Right cardiac atrium (tissue), 5 donors: ENCODE measurements at regions of chr12 and their contacts with region 1.

Region 1: GRCh38 chr12:123232807-123233543 is at the starts of genes MPHOSPH9 and MTRFR:
- DNase-seq: peak; percentile 99
- ATAC-seq: peak; percentile 99
- H3K4me3 ChIP-seq: peak within 1 kb of the TSS; percentile 88
- H3K27ac ChIP-seq: peak within 1 kb of the TSS; percentile 75
- H3K4me1 ChIP-seq: peaks cover 3% of the 10 kb centered on the region
- H3K27me3 ChIP-seq: no peaks in the 10 kb centered on the region
- total RNA-seq, gene MPHOSPH9: 14.8 to 27.4 (median 22.5) TPM
- total RNA-seq, gene MTRFR: 9.5 to 12.5 (median 10.7) TPM

Region 2: GRCh38 chr12:122860346-122861090 is 372.5 kb before region 1 on chr12:
- intact Hi-C with region 1: loop called in 1 of 4 experiments (anchors 10 kb)
- DNase-seq: peak; percentile 88 to 94 (median 94)
- ATAC-seq: peak; percentile 65 to 76
- H3K4me3 ChIP-seq: no peak overlapping the region
- H3K27ac ChIP-seq: no peak overlapping the region
- H3K4me1 ChIP-seq: no peaks in the 10 kb centered on the region
- H3K27me3 ChIP-seq: no peaks in the 10 kb centered on the region

Region 3: DNA sequence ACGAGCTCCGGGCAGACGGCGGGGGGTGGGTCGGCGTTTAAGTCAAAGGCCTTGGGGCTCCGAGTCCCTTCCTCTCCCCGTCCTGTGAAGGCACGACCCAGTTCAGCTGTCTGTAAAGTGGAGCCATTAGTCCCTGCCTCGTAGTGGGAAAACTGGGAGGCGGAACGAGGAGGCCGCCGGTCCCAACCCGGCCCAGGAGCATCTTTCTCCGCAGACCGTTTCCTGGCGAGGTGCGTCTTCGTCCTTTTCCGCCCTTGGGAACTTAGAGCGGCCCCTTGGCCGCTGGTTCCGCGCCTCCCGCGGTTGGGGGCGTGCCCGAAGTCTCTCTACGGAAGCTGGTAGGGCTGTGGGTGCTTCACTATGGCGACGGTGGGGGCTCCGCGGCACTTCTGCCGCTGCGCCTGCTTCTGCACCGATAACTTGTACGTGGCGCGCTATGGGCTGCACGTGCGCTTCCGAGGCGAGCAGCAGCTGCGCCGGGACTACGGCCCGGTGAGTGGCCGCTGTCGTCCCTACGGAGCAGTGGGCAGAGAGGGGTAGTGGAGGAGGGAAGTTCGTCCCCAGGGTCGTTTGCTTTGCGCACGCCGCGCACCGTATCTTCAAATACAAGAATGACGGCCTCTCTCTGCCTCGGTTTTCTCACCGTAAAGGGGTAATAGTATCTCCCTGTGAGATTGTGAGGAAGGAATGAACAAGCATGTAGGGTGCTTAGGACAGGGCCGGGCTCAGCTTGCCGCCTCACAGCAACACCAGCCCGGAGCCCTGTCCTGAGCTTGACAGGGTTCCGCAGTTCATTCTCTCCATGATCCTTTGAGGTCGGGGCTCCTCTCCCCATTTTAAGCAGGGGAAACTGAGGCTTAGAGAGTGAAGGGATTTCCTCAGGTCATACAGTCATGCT is 257.8 kb before region 1 on chr12 and contains the start of gene OGFOD2:
- intact Hi-C with region 1: loop called in 2 of 4 experiments (anchors 5 to 10 kb)
- DNase-seq: peak; percentile 93 to 97 (median 97)
- ATAC-seq: peak; percentile 93 to 94
- H3K4me3 ChIP-seq: peak within 1 kb of the TSS; percentile 87
- H3K27ac ChIP-seq: peak within 1 kb of the TSS; percentile 91
- H3K4me1 ChIP-seq: no peaks in the 10 kb centered on the region
- H3K27me3 ChIP-seq: no peaks in the 10 kb centered on the region
- total RNA-seq, gene OGFOD2: 9.6 to 17.8 (median 14.7) TPM

Region 4: DNA sequence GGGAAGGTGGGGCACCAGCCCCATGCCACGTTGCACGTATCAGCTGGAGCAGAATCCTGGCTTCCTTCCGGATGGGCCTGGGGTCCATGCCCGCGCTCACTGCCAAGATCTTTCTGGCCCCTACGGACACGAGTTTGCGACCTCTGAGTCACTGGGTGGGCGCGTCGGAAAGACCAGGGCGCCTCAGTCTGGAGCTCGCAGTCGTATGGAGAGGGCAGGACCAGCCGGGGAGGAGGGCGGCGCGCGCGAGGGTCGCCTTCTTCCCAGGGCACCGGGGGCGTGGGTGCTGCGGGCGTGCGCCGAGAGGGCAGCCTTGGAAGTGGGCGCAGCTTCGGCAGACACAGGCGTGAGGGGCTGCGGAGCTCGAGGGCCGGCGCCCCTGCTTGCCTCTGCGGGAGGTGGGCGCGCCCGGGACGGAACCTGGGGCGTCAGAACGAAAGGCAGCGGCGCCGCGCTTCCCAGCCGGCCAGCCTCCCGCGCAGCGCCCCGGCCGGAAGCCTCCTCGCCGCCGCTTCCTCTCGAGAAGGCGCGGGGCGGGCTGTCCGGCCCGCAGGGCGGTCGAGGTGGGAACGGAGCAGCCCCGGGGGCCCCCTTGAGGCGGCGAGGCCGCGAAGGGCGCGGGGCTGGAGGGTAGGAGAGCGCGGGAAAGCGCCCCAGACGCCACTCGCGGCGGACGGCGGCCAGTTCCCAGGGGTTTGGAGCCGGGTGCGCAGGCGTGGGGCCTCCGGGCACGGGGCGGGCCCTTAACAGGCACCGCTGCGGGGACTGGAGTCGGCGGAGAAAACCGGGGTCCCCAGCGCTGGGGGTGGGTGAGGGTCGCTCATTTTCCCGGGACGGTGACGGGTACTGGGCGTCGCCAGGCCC is 252.6 kb before region 1 on chr12 and contains the start of gene ARL6IP4:
- intact Hi-C with region 1: loop called in 2 of 4 experiments (anchors 5 to 10 kb)
- DNase-seq: peak; percentile 67 to 88 (median 87)
- ATAC-seq: peak; percentile 74 to 76
- H3K4me3 ChIP-seq: peak within 1 kb of the TSS; percentile 75
- H3K27ac ChIP-seq: peak within 1 kb of the TSS; percentile 43
- H3K4me1 ChIP-seq: peaks cover 6% of the 10 kb centered on the region
- H3K27me3 ChIP-seq: no peaks in the 10 kb centered on the region
- total RNA-seq, gene ARL6IP4: 158 to 185 (median 168) TPM

Region 5: GRCh38 chr12:123043536-123044001 is 189.4 kb before region 1 on chr12:
- intact Hi-C with region 1: loop called in 3 of 4 experiments (anchors 10 kb)
- DNase-seq: peak; percentile 79 to 94 (median 94)
- ATAC-seq: peak; percentile 87 to 90
- H3K4me3 ChIP-seq: no peak overlapping the region
- H3K27ac ChIP-seq: no peak overlapping the region
- H3K4me1 ChIP-seq: peaks cover 13% of the 10 kb centered on the region
- H3K27me3 ChIP-seq: no peaks in the 10 kb centered on the region